ENCODE measurements at regions of chr16 and their contacts with region 1.

Region 1: GRCh38 chr16:67198238-67198734 is 645 bp upstream of the ELMO3 start:
- DNase-seq: peak; percentile 53
- ATAC-seq: peak; percentile 13
- H3K4me3 Mint-ChIP-seq: peak overlapping the region; percentile 55
- H3K27ac Mint-ChIP-seq: peak overlapping the region; percentile 85; the same call in 1 of the 2 replicates
- H3K4me1 Mint-ChIP-seq: peaks cover 13% of the 10 kb centered on the region
- H3K27me3 Mint-ChIP-seq: no peaks in the 10 kb centered on the region
- CTCF ChIP-seq: no peak

Region 2: GRCh38 chr16:66954097-66954659 is 244.1 kb before region 1 on chr16:
- CTCF ChIA-PET with region 1: interaction called, 16 read pairs
- POLR2A ChIA-PET with region 1: no interaction called
- DNase-seq: peak; percentile 85
- ATAC-seq: peak; percentile 88
- H3K4me3 Mint-ChIP-seq: no peak overlapping the region
- H3K27ac Mint-ChIP-seq: no peak overlapping the region
- H3K4me1 Mint-ChIP-seq: peaks cover 4% of the 10 kb centered on the region
- H3K27me3 Mint-ChIP-seq: peaks cover 40% of the 10 kb centered on the region
- CTCF ChIP-seq: peak; percentile 62; the same call in 1 of the 2 replicates

Region 3: GRCh38 chr16:67173808-67174705 is 24.2 kb before region 1 on chr16:
- CTCF ChIA-PET with region 1: interaction called, 49 read pairs
- POLR2A ChIA-PET with region 1: interaction called, 3 read pairs
- DNase-seq: peak; percentile 76
- ATAC-seq: peak; percentile 19
- H3K4me3 Mint-ChIP-seq: peak overlapping the region; percentile 84
- H3K27ac Mint-ChIP-seq: no peak overlapping the region; the same call in 1 of the 2 replicates
- H3K4me1 Mint-ChIP-seq: peaks cover 36% of the 10 kb centered on the region
- H3K27me3 Mint-ChIP-seq: peaks cover 89% of the 10 kb centered on the region
- CTCF ChIP-seq: no peak

Region 4: GRCh38 chr16:67216612-67217490 is 18.6 kb after region 1 on chr16:
- CTCF ChIA-PET with region 1: interaction called, 65 read pairs
- POLR2A ChIA-PET with region 1: no interaction called
- DNase-seq: no peak
- ATAC-seq: no peak
- H3K4me3 Mint-ChIP-seq: no peak overlapping the region
- H3K27ac Mint-ChIP-seq: peak overlapping the region; percentile 24; the same call in 1 of the 2 replicates
- H3K4me1 Mint-ChIP-seq: no peaks in the 10 kb centered on the region
- H3K27me3 Mint-ChIP-seq: peaks cover 55% of the 10 kb centered on the region
- CTCF ChIP-seq: no peak

Region 5: DNA sequence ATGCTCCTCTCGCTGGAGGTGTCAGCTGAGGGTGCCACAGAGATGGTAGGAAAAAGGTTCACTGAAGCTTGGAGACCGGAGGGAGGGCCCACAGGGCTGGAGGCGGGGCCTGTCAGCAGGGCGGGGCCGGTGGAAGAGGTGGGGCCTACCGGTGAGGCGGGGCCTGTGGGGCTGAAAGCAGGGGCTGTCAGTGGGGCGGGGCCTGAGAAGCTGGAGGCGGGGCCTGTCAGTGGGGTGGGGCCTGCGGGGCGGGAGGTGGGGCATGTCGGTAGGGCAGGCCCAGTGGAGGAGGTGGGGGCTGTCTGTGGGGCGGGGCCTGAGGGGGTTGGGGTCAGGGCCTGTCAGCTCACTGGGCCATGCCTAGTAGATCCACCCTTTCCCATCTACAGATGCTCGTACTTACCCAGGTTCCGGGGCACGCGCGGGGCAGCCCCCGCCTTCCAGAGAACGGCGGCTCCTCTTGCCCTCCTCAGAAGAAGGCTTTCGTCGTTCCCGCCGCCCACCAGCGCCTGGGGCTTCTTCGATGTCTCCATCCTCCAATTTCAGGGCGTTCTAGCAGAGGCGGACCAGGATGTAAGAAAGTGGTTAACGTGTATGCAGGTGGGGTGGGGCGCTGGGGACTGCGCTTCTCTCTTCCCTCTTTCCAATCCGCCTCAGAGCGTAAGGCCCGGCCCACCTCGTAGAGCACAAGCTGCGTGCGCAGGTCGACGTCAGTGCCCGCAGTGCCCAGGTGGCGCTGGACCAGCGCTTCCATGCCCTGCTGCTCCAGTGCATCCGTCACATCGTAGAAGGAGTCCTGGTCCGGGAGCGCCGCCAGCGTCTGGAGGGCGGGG is 38.5 kb after region 1 on chr16:
- CTCF ChIA-PET with region 1: interaction called, 17 read pairs
- POLR2A ChIA-PET with region 1: no interaction called
- DNase-seq: peak; percentile 96
- ATAC-seq: peak; percentile 93
- H3K4me3 Mint-ChIP-seq: peak overlapping the region; percentile 43; the same call in 1 of the 2 replicates
- H3K27ac Mint-ChIP-seq: peak overlapping the region; percentile 80
- H3K4me1 Mint-ChIP-seq: peaks cover 17% of the 10 kb centered on the region
- H3K27me3 Mint-ChIP-seq: no peaks in the 10 kb centered on the region
- CTCF ChIP-seq: no peak

Region 6: GRCh38 chr16:67277294-67277998 is 79.2 kb after region 1 on chr16:
- CTCF ChIA-PET with region 1: no interaction called
- POLR2A ChIA-PET with region 1: no interaction called
- DNase-seq: no peak
- ATAC-seq: no peak
- H3K4me3 Mint-ChIP-seq: no peak overlapping the region
- H3K27ac Mint-ChIP-seq: no peak overlapping the region
- H3K4me1 Mint-ChIP-seq: peaks cover 2% of the 10 kb centered on the region; the same call in 1 of the 2 replicates
- H3K27me3 Mint-ChIP-seq: peaks cover 23% of the 10 kb centered on the region
- CTCF ChIP-seq: no peak